Activated CD4-positive, alpha-beta memory T cell treated with anti-CD3 and anti-CD28 coated beads, Interleukin-2, amount 10 ng/mL, durations not matched to agents 7 days and 5 days (primary cell): ENCODE measurements at regions of chr11 and their contacts with region 1.

Region 1: DNA sequence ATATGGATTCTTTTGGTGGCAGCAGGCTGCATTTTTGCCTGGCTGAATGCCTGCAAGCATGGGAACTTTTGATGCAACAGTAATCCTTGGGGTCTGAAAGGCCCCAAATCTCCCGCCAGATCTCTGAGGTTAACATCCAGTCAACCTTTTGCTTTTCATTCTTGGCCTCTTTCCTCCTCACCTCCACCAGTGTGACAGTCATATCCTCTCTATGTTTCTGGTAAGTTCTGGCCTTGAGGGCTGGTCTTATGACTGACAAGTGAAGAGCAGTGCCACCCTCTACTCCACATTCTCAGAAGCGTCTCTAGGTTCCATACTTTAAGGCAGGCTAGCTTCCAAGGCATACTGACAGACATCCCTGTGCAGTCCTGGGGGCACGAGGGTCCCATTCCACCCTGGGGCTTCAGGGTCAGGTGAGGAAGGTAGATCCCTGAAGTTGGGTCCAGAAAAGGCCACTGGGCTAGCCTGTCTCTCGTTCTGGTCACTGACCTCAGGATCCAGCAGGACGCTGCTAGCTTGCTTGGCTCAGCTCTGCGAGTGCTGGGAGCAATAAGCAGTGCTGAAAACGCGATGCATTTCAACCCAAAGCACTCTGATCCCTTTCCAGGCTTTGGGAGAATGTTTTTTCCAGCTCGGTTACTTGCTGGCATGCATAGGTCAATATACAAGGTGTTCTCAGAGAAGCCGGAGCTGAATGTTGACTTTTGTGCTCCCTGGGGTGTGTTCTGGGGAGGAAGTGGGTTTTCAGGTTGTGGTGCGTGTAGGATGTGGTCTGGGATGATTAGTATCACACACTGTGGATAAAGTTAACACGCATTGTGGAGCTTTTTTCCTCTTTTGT is 75.2 kb downstream of the PTPRJ start:
- DNase-seq: peak; percentile 91
- H3K4me3 Mint-ChIP-seq: peak overlapping the region; percentile 53
- H3K27ac Mint-ChIP-seq: peak overlapping the region; percentile 88
- H3K4me1 Mint-ChIP-seq: peaks cover 90% of the 10 kb centered on the region
- H3K27me3 Mint-ChIP-seq: no peaks in the 10 kb centered on the region

Region 2: DNA sequence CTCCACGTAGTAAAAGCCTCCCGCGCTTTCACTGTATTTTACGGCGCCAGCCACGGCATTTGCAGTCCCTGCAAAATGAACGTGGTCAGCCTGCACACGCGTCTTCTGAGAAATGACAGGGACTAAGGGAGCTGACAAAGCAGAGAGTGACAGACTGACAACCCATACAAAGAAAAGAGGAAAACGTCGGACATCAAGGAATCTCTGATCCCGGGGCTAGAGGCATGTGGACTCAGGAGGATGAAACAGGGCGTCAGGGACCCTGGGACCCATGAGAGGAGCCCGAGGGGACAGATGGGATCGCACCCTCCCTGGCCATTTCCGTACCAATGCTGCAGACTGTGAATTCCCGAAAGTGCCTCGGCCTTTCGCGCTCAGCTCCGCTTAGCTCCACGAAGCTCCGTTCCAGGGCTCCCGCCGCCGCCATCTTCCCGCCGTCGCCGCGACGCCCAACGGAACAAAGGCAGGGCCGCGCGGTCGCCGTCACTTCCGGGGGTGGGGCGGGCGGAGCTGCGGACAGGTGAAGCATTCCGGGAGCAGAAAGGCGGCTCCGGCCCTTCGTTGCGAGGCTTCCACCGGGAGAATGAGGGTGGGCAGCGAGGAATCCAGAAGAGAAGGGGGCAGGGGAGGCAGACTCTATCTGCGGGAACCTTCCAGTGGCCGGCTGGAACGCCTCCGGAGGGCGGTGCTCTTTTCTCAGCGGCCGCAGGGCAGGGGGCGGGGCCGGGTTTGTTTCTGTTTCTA is 207.4 kb before region 1 on chr11 and contains the start of gene NUP160:
- CTCF ChIA-PET with region 1: no interaction called
- POLR2A ChIA-PET with region 1: interaction called, 10 read pairs
- DNase-seq: peak; percentile 91
- H3K4me3 Mint-ChIP-seq: peak within 1 kb of the TSS; percentile 89
- H3K27ac Mint-ChIP-seq: peak within 1 kb of the TSS; percentile 94
- H3K4me1 Mint-ChIP-seq: peaks cover 49% of the 10 kb centered on the region
- H3K27me3 Mint-ChIP-seq: no peaks in the 10 kb centered on the region
- total RNA-seq, gene NUP160: 52.0 to 52.9 TPM

Region 3: GRCh38 chr11:47980245-47981049 is 75.1 kb before region 1 on chr11 and contains the start of gene PTPRJ:
- CTCF ChIA-PET with region 1: interaction called, 9 read pairs
- POLR2A ChIA-PET with region 1: interaction called, 57 read pairs
- DNase-seq: peak; percentile 60
- H3K4me3 Mint-ChIP-seq: peak within 1 kb of the TSS; percentile 99
- H3K27ac Mint-ChIP-seq: peak within 1 kb of the TSS; percentile 94
- H3K4me1 Mint-ChIP-seq: peaks cover 27% of the 10 kb centered on the region
- H3K27me3 Mint-ChIP-seq: peaks cover 15% of the 10 kb centered on the region
- total RNA-seq, gene PTPRJ: 83.0 to 89.1 TPM

Region 4: DNA sequence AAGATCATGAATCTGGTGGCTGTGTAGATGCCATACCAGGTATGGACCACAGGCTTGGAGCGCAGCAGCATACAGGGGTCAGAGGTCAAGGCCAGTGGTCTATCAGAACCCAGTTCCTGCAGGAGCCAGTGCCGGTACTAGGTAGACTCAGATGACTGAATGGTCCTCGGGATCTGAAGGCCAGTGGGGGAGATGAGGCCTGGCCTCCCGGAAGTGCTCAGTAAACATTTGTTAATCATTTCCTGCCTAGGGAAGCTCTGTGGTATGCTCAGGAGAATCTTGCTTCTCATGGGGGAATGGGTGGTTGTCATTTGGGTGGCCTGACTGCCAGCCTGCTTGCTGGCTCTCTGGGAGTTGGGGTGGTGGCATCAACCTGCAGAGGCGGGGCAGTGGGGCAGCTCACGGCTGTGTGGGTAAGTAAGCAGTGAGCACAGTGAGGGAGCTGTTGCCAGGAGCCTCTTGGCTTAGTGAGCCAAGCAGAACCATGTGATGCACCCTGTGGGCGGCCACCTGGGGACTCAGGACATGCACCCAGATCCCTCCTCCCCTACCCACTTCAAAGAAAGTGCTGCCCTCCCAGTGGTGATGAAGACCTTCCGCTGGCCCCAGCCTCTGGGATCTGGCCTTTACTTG is 42.1 kb before region 1 on chr11:
- CTCF ChIA-PET with region 1: interaction called, 16 read pairs
- POLR2A ChIA-PET with region 1: interaction called, 519 read pairs
- DNase-seq: peak; percentile 83
- H3K4me3 Mint-ChIP-seq: peak overlapping the region; percentile 69
- H3K27ac Mint-ChIP-seq: peak overlapping the region; percentile 99
- H3K4me1 Mint-ChIP-seq: peaks cover 91% of the 10 kb centered on the region
- H3K27me3 Mint-ChIP-seq: no peaks in the 10 kb centered on the region

Region 5: GRCh38 chr11:48034926-48035871 is 20.3 kb before region 1 on chr11:
- CTCF ChIA-PET with region 1: no interaction called
- POLR2A ChIA-PET with region 1: interaction called, 19 read pairs
- DNase-seq: no peak
- H3K4me3 Mint-ChIP-seq: no peak overlapping the region
- H3K27ac Mint-ChIP-seq: peak overlapping the region; percentile 5
- H3K4me1 Mint-ChIP-seq: peaks cover 69% of the 10 kb centered on the region
- H3K27me3 Mint-ChIP-seq: no peaks in the 10 kb centered on the region

Region 6: DNA sequence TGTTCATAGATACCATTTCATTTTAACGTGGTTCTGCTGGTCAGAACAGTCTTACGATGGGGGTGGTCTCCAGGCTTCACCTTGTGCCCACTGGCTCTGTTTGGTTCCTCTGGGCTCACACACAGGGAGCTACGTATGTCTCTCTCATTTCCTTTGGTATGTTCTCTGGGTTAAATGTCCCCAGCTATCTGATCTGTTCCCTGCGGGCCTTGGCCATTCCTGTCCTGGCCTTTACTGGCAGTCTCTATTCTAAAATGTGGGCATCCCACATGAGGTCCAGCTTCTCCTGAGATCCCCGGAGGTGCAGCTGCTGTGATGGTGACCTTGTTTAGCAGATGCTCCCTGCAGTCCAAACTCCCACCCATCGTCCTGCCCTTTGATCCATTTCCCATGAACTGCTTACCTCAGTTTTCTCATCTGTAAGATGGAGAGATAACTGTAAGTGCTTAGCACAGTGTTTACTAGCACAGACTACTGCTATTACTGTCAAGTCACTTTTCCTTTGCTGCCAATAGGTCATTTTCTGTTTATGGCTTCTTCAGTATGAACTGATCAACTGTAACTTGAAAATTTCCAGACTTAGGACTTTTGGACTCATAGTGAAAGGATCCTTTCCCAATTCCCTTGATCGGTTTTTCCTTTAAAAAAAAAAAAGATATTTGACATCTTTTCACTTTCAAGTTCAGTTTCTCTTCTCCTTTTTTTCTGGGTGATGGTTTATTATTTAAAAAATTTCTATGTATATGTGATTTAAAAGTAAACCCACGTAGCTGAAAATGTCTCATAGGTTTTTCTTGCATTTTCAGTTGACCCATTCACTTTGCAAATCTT is 17.7 kb after region 1 on chr11:
- CTCF ChIA-PET with region 1: interaction called, 4 read pairs
- POLR2A ChIA-PET with region 1: interaction called, 34 read pairs
- DNase-seq: no peak
- H3K4me3 Mint-ChIP-seq: no peak overlapping the region
- H3K27ac Mint-ChIP-seq: no peak overlapping the region
- H3K4me1 Mint-ChIP-seq: peaks cover 31% of the 10 kb centered on the region
- H3K27me3 Mint-ChIP-seq: no peaks in the 10 kb centered on the region